ENCODE measurements at regions of chr11 and their contacts with region 1.

Region 1: GRCh38 chr11:70191495-70192140 is 11.5 kb upstream of the FADD start:
- DNase-seq: peak; percentile 24
- ATAC-seq: peak; percentile 21
- H3K4me3 Mint-ChIP-seq: no peak overlapping the region
- H3K27ac Mint-ChIP-seq: no peak overlapping the region
- H3K4me1 Mint-ChIP-seq: peaks cover 3% of the 10 kb centered on the region
- H3K27me3 Mint-ChIP-seq: peaks cover 7% of the 10 kb centered on the region
- CTCF ChIP-seq: no peak

Region 2: GRCh38 chr11:69909561-69910496 is 281.8 kb before region 1 on chr11:
- CTCF ChIA-PET with region 1: interaction called, 10 read pairs
- POLR2A ChIA-PET with region 1: no interaction called
- intact Hi-C with region 1: loop called (anchors 1 kb)
- DNase-seq: no peak
- ATAC-seq: no peak
- H3K4me3 Mint-ChIP-seq: no peak overlapping the region
- H3K27ac Mint-ChIP-seq: no peak overlapping the region
- H3K4me1 Mint-ChIP-seq: no peaks in the 10 kb centered on the region
- H3K27me3 Mint-ChIP-seq: peaks cover 16% of the 10 kb centered on the region
- CTCF ChIP-seq: no peak

Region 3: GRCh38 chr11:69918938-69919650 is 272.5 kb before region 1 on chr11:
- CTCF ChIA-PET with region 1: interaction called, 4 read pairs
- POLR2A ChIA-PET with region 1: no interaction called
- intact Hi-C with region 1: loop called (anchors 1 kb)
- DNase-seq: peak; percentile 57
- ATAC-seq: no peak
- H3K4me3 Mint-ChIP-seq: no peak overlapping the region
- H3K27ac Mint-ChIP-seq: no peak overlapping the region
- H3K4me1 Mint-ChIP-seq: no peaks in the 10 kb centered on the region
- H3K27me3 Mint-ChIP-seq: peaks cover 16% of the 10 kb centered on the region
- CTCF ChIP-seq: no peak

Region 4: DNA sequence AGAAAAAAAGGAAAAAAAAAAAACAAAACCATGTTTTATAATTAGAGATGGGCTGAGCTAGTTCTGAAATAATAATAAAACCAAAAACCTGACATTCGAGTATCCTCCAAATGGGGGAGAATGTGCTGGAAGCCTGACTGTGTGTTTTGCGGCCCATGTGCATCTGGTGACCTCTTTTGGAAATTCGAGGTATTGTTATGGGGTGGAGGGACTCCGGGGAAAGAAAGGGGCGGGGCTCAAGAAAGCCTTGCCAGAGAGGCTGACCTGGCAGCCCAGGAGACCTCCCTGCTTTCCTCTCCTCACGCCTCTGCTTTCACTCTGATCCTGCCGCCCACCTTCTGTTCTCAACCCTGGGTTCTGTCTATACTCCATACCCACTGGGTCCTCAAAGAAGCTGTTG is 279.6 kb after region 1 on chr11:
- CTCF ChIA-PET with region 1: no interaction called
- POLR2A ChIA-PET with region 1: no interaction called
- intact Hi-C with region 1: loop called (anchors 1 kb)
- DNase-seq: no peak
- ATAC-seq: peak; percentile 62
- H3K4me3 Mint-ChIP-seq: no peak overlapping the region
- H3K27ac Mint-ChIP-seq: no peak overlapping the region
- H3K4me1 Mint-ChIP-seq: peaks cover 12% of the 10 kb centered on the region
- H3K27me3 Mint-ChIP-seq: peaks cover 1% of the 10 kb centered on the region
- CTCF ChIP-seq: no peak